ENCODE measurements at regions of chr21 and their contacts with region 1.

Region 1: GRCh38 chr21:45152265-45152746 is 77.9 kb downstream of the ADARB1 start:
- DNase-seq: peak; percentile 88
- ATAC-seq: peak; percentile 98
- H3K4me3 Mint-ChIP-seq: peak overlapping the region; percentile 65
- H3K27ac Mint-ChIP-seq: peak overlapping the region; percentile 84
- H3K4me1 Mint-ChIP-seq: peaks cover 47% of the 10 kb centered on the region
- H3K27me3 Mint-ChIP-seq: no peaks in the 10 kb centered on the region

Region 2: GRCh38 chr21:45064618-45065399 is 87.5 kb before region 1 on chr21:
- CTCF ChIA-PET with region 1: no interaction called
- POLR2A ChIA-PET with region 1: no interaction called
- DNase-seq: no peak
- ATAC-seq: no peak
- H3K4me3 Mint-ChIP-seq: no peak overlapping the region
- H3K27ac Mint-ChIP-seq: no peak overlapping the region
- H3K4me1 Mint-ChIP-seq: no peaks in the 10 kb centered on the region
- H3K27me3 Mint-ChIP-seq: peaks cover 17% of the 10 kb centered on the region

Region 3: DNA sequence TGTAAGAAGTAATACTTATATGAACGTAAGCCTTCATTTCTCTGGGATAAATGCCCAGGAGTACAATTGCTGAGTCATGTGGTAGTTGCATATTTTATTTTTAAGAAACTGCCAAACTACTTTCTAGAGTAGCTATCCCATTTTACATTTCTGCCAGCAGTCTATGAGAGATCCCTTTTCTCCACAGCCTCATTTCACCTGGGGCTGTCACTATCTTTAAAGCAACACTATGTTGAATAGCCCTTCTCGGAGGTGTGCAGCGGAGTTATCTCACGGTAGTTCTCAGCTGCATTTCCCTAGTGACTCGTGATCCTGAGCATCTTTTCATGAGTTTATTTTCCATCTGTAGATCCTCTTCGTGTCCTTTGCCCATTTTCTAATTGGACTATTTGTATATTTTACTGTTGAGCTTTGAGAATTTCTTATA is 15.5 kb after region 1 on chr21:
- CTCF ChIA-PET with region 1: interaction called, 17 read pairs
- POLR2A ChIA-PET with region 1: interaction called, 4 read pairs
- DNase-seq: no peak
- ATAC-seq: no peak
- H3K4me3 Mint-ChIP-seq: no peak overlapping the region
- H3K27ac Mint-ChIP-seq: no peak overlapping the region
- H3K4me1 Mint-ChIP-seq: peaks cover 23% of the 10 kb centered on the region
- H3K27me3 Mint-ChIP-seq: no peaks in the 10 kb centered on the region

Region 4: GRCh38 chr21:45655124-45655523 is 502.8 kb after region 1 on chr21:
- CTCF ChIA-PET with region 1: no interaction called
- POLR2A ChIA-PET with region 1: no interaction called
- DNase-seq: no peak
- ATAC-seq: no peak
- H3K4me3 Mint-ChIP-seq: no peak overlapping the region
- H3K27ac Mint-ChIP-seq: no peak overlapping the region
- H3K4me1 Mint-ChIP-seq: peaks cover 5% of the 10 kb centered on the region
- H3K27me3 Mint-ChIP-seq: no peaks in the 10 kb centered on the region